ENCODE measurements at regions of chr4 and their contacts with region 1.

Region 1: DNA sequence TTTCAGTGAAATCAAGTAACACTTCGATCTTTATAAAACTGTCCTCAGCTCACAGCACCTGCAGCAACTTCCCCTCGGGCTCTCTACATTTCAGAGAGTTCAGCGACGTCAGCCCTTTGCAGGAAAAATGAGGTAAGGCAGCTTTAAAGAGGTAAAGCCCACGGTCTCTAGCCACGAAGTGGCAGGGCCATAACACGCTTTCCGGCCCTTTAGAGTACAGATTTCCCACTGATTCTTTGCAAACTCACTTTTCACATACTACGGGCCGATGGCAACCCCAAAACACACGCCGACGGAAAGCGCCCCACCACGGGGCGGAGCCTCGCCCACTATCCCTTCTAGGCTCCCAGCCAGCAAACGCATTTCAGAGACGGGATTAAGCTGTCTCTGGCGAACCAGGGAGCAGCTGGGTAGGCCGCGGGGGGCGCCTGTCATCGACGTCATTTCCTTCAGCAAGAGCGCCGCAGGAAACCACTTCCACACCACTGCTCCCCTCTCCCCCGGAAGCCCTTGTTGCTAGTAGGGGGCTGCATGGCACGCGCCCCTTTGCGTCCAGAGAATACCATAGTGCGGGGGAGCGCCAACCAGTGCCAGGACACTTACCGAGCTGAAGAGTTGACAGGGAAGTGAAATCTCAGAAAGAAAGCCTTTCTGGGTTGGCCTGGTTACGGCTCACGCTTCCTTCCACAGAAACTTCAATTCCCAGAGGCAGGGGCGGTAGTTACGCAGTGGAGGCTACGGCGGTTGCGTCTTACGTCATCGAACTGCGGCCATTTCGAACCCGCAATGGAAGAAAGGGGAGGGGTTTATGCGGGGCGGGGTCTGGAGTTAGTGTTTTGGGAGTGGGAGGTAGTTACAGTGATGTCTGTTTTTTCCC is at the start of gene TRMT10A:
- DNase-seq: peak; percentile 88 to 98 (median 92)
- ATAC-seq: peak; percentile 81
- H3K4me3 ChIP-seq: peak within 1 kb of the TSS; percentile 80
- H3K4me3 Mint-ChIP-seq: peak within 1 kb of the TSS; percentile 91
- H3K27ac ChIP-seq: peak within 1 kb of the TSS; percentile 98 to 99
- H3K27ac Mint-ChIP-seq: peak within 1 kb of the TSS; percentile 99
- H3K4me1 ChIP-seq: peaks cover 11% of the 10 kb centered on the region
- H3K4me1 Mint-ChIP-seq: peaks cover 25% of the 10 kb centered on the region
- H3K27me3 ChIP-seq: peaks cover 0 to 9% of the 10 kb centered on the region in 2 experiments
- H3K27me3 Mint-ChIP-seq: peaks cover 28% of the 10 kb centered on the region
- CTCF ChIP-seq: no peak
- total RNA-seq, gene TRMT10A: 1.6 to 2.0 TPM

Region 2: DNA sequence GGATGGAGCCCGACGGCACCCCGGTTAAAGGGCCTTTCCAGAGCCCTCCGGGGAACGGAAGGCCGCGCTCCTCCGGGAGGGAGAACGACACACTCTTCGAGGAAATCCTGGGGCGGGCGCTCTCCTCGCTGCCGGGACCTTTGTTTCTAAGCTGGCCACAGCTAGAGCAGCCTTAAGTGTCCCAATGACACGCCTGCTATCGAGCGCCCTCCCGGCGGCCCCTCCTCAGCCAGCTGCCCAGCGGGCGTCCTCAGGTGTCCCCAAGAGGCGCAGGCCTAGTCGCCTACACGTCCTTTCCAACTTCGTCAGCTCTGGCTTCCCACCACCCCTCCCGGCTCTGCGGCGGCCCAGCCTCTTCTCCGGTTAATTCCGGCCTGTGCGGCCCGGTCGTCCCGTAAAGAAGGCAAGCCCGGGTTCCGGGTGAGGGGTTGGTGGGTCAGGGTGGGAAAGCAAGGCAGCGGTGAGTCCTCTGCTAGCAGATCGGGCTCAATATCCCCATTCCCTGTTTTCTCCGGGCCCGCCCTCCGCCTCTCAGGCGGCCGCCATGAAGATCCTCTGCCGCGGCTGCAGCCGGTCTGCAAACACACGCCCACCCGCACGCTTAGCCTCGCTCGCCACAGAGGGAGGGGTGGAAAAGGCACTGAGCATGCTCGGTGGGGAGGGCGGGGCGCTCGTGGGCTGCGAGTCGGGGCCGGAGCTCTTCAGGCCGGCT is 1302.8 kb before region 1 on chr4:
- CTCF ChIA-PET with region 1: no interaction called
- POLR2A ChIA-PET with region 1: interaction called, 3 read pairs
- intact Hi-C with region 1: loop called in 1 of 2 experiments (anchors 5 kb)
- DNase-seq: peak in 13 of 14 experiments; percentile 76 to 96 (median 89)
- ATAC-seq: peak; percentile 68
- H3K4me3 ChIP-seq: peak overlapping the region; percentile 96
- H3K4me3 Mint-ChIP-seq: peak overlapping the region; percentile 95
- H3K27ac ChIP-seq: peak overlapping the region; percentile 81 to 82
- H3K27ac Mint-ChIP-seq: peak overlapping the region; percentile 88
- H3K4me1 ChIP-seq: peaks cover 19% of the 10 kb centered on the region
- H3K4me1 Mint-ChIP-seq: peaks cover 61% of the 10 kb centered on the region
- H3K27me3 ChIP-seq: no peaks in the 10 kb centered on the region
- H3K27me3 Mint-ChIP-seq: no peaks in the 10 kb centered on the region
- CTCF ChIP-seq: no peak

Region 3: GRCh38 chr4:98510757-98511517 is 1052.6 kb before region 1 on chr4:
- CTCF ChIA-PET with region 1: no interaction called
- POLR2A ChIA-PET with region 1: no interaction called
- intact Hi-C with region 1: no loop called
- DNase-seq: no peak
- ATAC-seq: no peak
- H3K4me3 ChIP-seq: no peak overlapping the region
- H3K4me3 Mint-ChIP-seq: no peak overlapping the region
- H3K27ac ChIP-seq: no peak overlapping the region
- H3K27ac Mint-ChIP-seq: no peak overlapping the region
- H3K4me1 ChIP-seq: peaks cover 11% of the 10 kb centered on the region
- H3K4me1 Mint-ChIP-seq: peaks cover 19% of the 10 kb centered on the region
- H3K27me3 ChIP-seq: no peaks in the 10 kb centered on the region
- H3K27me3 Mint-ChIP-seq: no peaks in the 10 kb centered on the region
- CTCF ChIP-seq: no peak

Region 4: GRCh38 chr4:99088481-99089365 is 474.8 kb before region 1 on chr4 and contains the start of gene ADH5:
- CTCF ChIA-PET with region 1: no interaction called
- POLR2A ChIA-PET with region 1: interaction called, 3 read pairs
- intact Hi-C with region 1: loop called (anchors 5 kb)
- DNase-seq: peak; percentile 86 to 96 (median 91)
- ATAC-seq: peak; percentile 95
- H3K4me3 ChIP-seq: peak within 1 kb of the TSS; percentile 93
- H3K4me3 Mint-ChIP-seq: peak within 1 kb of the TSS; percentile 95
- H3K27ac ChIP-seq: peak within 1 kb of the TSS; percentile 76 to 82
- H3K27ac Mint-ChIP-seq: peak within 1 kb of the TSS; percentile 93
- H3K4me1 ChIP-seq: peaks cover 25% of the 10 kb centered on the region
- H3K4me1 Mint-ChIP-seq: peaks cover 65% of the 10 kb centered on the region
- H3K27me3 ChIP-seq: no peaks in the 10 kb centered on the region
- H3K27me3 Mint-ChIP-seq: no peaks in the 10 kb centered on the region
- CTCF ChIP-seq: no peak
- total RNA-seq, gene ADH5: 49.1 to 52.0 TPM

Region 5: DNA sequence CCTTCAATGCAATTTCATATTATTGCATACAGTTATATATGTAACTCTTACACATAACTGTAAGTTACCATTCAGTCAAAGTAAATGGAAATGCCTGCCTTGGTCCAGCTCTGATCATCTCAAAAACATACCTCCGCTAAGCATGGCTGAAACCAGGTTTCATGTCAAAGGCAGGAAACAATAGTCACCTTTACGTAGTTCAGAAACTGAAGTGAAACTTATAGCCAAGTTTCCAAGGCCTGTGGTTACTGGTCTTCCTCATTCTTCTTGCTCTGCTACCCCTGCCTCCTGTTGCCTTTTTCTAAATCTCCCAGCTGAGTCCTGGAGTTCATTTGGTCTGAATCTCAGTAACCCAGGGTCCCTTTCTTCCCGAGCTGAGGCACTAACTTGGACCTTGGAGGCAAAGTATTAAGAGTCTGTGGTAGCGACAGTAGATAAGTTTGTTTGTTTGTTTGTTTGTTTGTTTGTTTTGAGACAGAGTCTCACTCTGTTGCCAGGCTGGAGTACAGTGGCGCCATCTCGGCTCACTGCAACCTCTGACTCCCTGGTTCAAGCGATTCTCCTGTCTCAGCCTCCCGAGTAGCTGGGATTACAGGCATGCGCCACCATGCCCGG is 283.9 kb after region 1 on chr4:
- CTCF ChIA-PET with region 1: no interaction called
- POLR2A ChIA-PET with region 1: interaction called, 15 read pairs
- intact Hi-C with region 1: no loop called
- DNase-seq: peak in 5 of 14 experiments; percentile 6 to 63 (median 57)
- ATAC-seq: peak; percentile 37
- H3K4me3 ChIP-seq: peak overlapping the region; percentile 15
- H3K4me3 Mint-ChIP-seq: peak overlapping the region; percentile 53
- H3K27ac ChIP-seq: peak overlapping the region in 1 of 2 donors; percentile 68
- H3K27ac Mint-ChIP-seq: peak overlapping the region; percentile 86
- H3K4me1 ChIP-seq: peaks cover 35% of the 10 kb centered on the region
- H3K4me1 Mint-ChIP-seq: peaks cover 59% of the 10 kb centered on the region
- H3K27me3 ChIP-seq: no peaks in the 10 kb centered on the region
- H3K27me3 Mint-ChIP-seq: no peaks in the 10 kb centered on the region
- CTCF ChIP-seq: no peak

Region 6: DNA sequence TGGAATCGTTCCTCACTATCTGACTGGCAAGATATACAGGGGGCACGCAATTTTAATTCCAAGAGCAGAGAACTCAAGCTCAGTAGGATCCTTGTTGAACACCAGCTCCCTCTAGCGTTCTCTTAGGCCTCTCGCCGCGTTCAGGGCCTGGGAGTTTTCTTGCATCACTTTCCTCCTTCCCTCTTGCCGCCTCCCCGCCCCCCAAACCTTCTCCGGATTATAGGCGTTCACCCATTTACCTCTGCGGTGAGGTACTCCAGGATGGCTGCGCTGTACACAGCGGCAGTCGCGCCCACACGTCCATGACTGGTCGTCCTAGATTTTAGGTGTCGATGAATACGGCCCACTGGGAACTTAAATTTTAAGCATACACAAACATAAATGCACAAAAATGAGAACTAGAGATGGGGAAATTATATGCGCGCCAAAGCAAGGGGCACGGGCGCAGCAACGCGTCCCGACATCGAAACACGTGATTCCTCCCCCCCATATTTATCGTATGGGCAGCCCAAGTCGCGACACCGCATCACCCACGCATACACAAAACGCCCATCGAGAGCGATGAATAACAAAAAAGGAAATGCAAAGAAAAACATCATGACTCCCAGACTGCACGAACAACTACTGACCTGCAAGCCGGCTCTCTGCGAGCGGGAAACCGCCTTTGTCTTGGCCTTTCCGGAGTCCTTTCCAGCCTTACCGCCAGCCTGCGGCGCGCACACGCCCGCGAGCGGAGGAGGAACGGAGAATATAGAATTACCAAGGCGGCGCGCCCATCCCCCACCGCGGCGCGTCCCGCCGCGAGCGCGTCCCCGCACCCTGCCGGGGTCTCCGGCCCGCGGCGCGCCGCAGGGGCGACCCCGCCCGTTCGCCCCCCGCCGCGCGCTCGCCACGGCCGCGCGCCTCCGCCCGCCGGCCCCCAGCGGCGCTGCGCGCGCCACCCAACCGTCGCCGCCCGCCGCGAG is 385.8 kb after region 1 on chr4:
- CTCF ChIA-PET with region 1: interaction called, 6 read pairs
- POLR2A ChIA-PET with region 1: interaction called, 55 read pairs
- intact Hi-C with region 1: loop called (anchors 1 to 2 kb)
- DNase-seq: peak; percentile 72 to 95 (median 82)
- ATAC-seq: peak; percentile 37
- H3K4me3 ChIP-seq: peak overlapping the region; percentile 93
- H3K4me3 Mint-ChIP-seq: no peak overlapping the region
- H3K27ac ChIP-seq: peak overlapping the region; percentile 84 to 90
- H3K27ac Mint-ChIP-seq: no peak overlapping the region
- H3K4me1 ChIP-seq: peaks cover 33% of the 10 kb centered on the region
- H3K4me1 Mint-ChIP-seq: peaks cover 31% of the 10 kb centered on the region
- H3K27me3 ChIP-seq: no peaks in the 10 kb centered on the region
- H3K27me3 Mint-ChIP-seq: no peaks in the 10 kb centered on the region
- CTCF ChIP-seq: peak; percentile 86

Region 7: GRCh38 chr4:101347557-101348366 is 1784.2 kb after region 1 on chr4:
- CTCF ChIA-PET with region 1: no interaction called
- POLR2A ChIA-PET with region 1: no interaction called
- intact Hi-C with region 1: loop called (anchors 5 to 10 kb)
- DNase-seq: peak; percentile 98 to 100 (median 99)
- ATAC-seq: peak; percentile 84
- H3K4me3 ChIP-seq: peak overlapping the region; percentile 86
- H3K4me3 Mint-ChIP-seq: peak overlapping the region; percentile 100
- H3K27ac ChIP-seq: peak overlapping the region; percentile 78 to 84
- H3K27ac Mint-ChIP-seq: peak overlapping the region; percentile 94
- H3K4me1 ChIP-seq: peaks cover 15% of the 10 kb centered on the region
- H3K4me1 Mint-ChIP-seq: peaks cover 38% of the 10 kb centered on the region
- H3K27me3 ChIP-seq: peaks cover 0 to 7% of the 10 kb centered on the region in 2 experiments
- H3K27me3 Mint-ChIP-seq: peaks cover 36% of the 10 kb centered on the region
- CTCF ChIP-seq: no peak

Measured in CD4-positive, alpha-beta T cell (primary cell).